CD4-positive, alpha-beta T cell (primary cell): ENCODE measurements at regions of chr17 and their contacts with region 1.

Region 1: GRCh38 chr17:59619293-59620063 is at the start of gene CLTC:
- DNase-seq: peak; percentile 81 to 98 (median 88)
- ATAC-seq: peak; percentile 82
- H3K4me3 ChIP-seq: peak within 1 kb of the TSS; percentile 96
- H3K4me3 Mint-ChIP-seq: peak within 1 kb of the TSS; percentile 97
- H3K27ac ChIP-seq: peak within 1 kb of the TSS; percentile 95 to 96
- H3K27ac Mint-ChIP-seq: peak within 1 kb of the TSS; percentile 98
- H3K4me1 ChIP-seq: peaks cover 22% of the 10 kb centered on the region
- H3K4me1 Mint-ChIP-seq: peaks cover 66% of the 10 kb centered on the region
- H3K27me3 ChIP-seq: no peaks in the 10 kb centered on the region
- H3K27me3 Mint-ChIP-seq: no peaks in the 10 kb centered on the region
- CTCF ChIP-seq: no peak
- total RNA-seq, gene CLTC: 81.5 to 89.9 TPM

Region 2: DNA sequence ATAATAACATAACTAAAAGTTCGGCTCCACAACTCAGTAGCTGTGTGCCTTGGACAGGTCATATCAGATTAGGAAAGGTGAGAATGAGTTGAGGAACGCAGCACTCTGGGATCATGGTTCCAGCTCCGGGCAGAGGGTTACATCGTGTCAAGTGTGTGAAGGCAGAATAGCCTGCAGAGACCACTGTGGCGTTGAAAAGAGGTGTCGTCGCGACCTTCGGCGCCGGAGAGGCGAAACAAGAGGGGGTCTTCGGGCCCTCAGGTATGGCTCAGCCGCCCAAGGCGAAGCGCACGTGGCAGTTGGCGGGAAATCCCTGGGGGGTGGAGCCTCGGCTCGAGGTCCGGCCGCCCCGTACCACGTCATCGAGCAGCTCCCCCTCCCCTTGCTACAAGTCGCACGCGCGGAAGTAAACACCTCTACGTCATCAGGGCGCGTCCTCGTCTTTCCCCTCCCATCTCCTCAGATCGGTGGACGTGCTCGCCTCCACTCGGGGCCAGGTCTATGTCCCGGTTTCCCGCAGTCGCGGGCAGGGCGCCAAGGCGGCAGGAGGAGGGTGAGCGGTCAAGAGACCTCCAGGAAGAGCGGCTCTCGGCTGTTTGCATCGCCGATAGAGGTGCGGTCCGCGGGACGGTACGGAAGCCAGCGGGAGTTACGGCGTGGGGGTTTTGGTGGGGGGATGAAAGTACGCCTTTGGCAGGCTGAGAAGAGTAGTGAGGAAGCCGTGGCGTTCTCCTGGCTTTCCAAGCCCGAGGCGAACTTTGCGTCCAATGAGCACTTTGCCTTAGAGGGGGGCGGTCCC is 54.1 kb before region 1 on chr17 and contains the start of gene DHX40:
- CTCF ChIA-PET with region 1: no interaction called
- POLR2A ChIA-PET with region 1: interaction called, 40 read pairs
- intact Hi-C with region 1: loop called (anchors 1 kb)
- DNase-seq: peak; percentile 86 to 99 (median 92)
- ATAC-seq: peak; percentile 87
- H3K4me3 ChIP-seq: peak within 1 kb of the TSS; percentile 90
- H3K4me3 Mint-ChIP-seq: peak within 1 kb of the TSS; percentile 100
- H3K27ac ChIP-seq: peak within 1 kb of the TSS; percentile 86 to 91
- H3K27ac Mint-ChIP-seq: peak within 1 kb of the TSS; percentile 97
- H3K4me1 ChIP-seq: peaks cover 13% of the 10 kb centered on the region
- H3K4me1 Mint-ChIP-seq: peaks cover 26% of the 10 kb centered on the region
- H3K27me3 ChIP-seq: no peaks in the 10 kb centered on the region
- H3K27me3 Mint-ChIP-seq: no peaks in the 10 kb centered on the region
- CTCF ChIP-seq: no peak
- total RNA-seq, gene DHX40: 62.6 to 65.6 TPM

Region 3: DNA sequence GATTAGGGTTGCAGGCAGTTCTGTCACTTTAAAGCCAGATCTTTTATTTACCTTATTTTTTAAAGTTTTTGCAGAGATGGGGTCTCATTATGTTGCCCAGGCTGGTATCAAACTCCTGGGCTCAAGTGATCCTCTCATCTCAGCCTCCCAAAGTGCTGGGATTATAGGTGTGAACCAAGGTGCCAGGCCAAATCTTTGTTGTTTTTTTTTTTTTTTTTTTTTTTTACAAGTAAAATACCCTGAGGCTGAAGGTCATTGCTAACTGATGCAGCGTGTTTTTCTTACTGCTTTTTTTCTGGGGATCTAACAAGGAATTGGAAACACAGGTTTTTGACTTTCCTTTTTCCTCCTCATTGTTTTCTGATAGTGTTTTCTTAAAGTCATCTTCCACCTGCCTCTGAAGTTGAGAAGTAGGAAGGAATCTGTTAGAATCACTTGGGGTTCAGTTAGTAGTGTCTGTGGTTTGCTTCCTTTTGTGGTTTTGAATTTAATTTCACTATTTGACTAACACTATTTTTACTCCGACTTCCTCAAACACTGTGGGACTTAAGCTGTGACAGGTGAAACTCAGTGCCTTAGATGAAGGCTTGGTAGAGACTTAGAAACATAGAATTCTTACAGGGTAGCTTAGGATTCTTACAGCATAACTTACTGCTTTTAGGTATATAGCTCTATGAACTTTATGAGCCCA is 22.5 kb after region 1 on chr17:
- CTCF ChIA-PET with region 1: no interaction called
- POLR2A ChIA-PET with region 1: interaction called, 32 read pairs
- intact Hi-C with region 1: loop called in 1 of 2 experiments (anchors 1 kb)
- DNase-seq: peak in 3 of 14 experiments; percentile 41 to 63 (median 49)
- ATAC-seq: peak; percentile 89
- H3K4me3 ChIP-seq: no peak overlapping the region
- H3K4me3 Mint-ChIP-seq: peak overlapping the region; percentile 32
- H3K27ac ChIP-seq: no peak overlapping the region
- H3K27ac Mint-ChIP-seq: peak overlapping the region; percentile 62
- H3K4me1 ChIP-seq: peaks cover 23% of the 10 kb centered on the region
- H3K4me1 Mint-ChIP-seq: peaks cover 63% of the 10 kb centered on the region
- H3K27me3 ChIP-seq: no peaks in the 10 kb centered on the region
- H3K27me3 Mint-ChIP-seq: no peaks in the 10 kb centered on the region
- CTCF ChIP-seq: no peak

Region 4: DNA sequence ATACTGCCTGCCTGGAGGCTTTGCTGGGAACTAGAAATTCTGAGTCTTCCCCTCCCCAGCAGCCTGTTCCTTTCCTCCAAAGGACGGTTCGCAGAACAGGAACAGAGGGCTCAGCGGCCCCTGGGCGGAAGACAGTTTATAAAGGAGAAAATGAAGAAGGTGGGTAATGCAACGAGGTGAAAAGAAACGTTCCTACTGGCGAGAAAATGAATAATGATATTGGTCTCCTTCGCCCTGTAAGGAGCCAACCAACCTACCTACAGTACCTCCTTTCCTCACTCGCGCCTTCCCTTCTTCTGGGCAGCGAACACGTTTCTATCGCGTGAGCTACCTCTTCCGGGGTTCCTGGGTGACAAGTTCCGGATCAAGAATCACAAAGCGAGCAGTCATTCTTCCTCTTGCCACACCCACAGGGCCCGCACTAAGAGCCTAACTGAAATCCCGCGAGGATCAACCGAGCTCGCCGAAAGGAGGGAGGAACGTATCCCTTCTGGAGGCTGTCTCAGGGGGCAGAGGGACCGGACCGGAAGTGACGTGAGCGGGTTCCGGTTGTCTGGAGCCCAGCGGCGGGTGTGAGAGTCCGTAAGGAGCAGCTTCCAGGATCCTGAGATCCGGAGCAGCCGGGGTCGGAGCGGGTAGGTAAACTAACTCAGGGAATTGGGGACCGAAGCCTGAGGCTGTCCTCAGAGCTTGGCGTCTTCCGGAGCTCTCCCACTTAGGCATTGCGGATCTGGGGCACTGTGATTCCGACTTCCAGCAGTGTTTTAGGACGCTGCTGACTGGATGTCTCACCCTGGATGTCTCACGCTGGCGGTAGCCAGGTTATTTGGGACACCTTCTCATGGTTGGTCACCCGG is 87.9 kb after region 1 on chr17 and contains the starts of genes PTRH2 and VMP1:
- CTCF ChIA-PET with region 1: interaction called, 3 read pairs
- POLR2A ChIA-PET with region 1: interaction called, 26 read pairs
- intact Hi-C with region 1: loop called in 1 of 2 experiments (anchors 5 kb)
- DNase-seq: peak; percentile 67 to 98 (median 81)
- ATAC-seq: peak; percentile 90
- H3K4me3 ChIP-seq: peak within 1 kb of the TSS; percentile 95
- H3K4me3 Mint-ChIP-seq: peak within 1 kb of the TSS; percentile 93
- H3K27ac ChIP-seq: peak within 1 kb of the TSS; percentile 80 to 96
- H3K27ac Mint-ChIP-seq: peak within 1 kb of the TSS; percentile 94
- H3K4me1 ChIP-seq: peaks cover 37% of the 10 kb centered on the region
- H3K4me1 Mint-ChIP-seq: peaks cover 81% of the 10 kb centered on the region
- H3K27me3 ChIP-seq: no peaks in the 10 kb centered on the region
- H3K27me3 Mint-ChIP-seq: no peaks in the 10 kb centered on the region
- CTCF ChIP-seq: no peak
- total RNA-seq, gene PTRH2: 6.5 to 7.3 TPM
- total RNA-seq, gene VMP1: 73.6 to 81.1 TPM

Region 5: DNA sequence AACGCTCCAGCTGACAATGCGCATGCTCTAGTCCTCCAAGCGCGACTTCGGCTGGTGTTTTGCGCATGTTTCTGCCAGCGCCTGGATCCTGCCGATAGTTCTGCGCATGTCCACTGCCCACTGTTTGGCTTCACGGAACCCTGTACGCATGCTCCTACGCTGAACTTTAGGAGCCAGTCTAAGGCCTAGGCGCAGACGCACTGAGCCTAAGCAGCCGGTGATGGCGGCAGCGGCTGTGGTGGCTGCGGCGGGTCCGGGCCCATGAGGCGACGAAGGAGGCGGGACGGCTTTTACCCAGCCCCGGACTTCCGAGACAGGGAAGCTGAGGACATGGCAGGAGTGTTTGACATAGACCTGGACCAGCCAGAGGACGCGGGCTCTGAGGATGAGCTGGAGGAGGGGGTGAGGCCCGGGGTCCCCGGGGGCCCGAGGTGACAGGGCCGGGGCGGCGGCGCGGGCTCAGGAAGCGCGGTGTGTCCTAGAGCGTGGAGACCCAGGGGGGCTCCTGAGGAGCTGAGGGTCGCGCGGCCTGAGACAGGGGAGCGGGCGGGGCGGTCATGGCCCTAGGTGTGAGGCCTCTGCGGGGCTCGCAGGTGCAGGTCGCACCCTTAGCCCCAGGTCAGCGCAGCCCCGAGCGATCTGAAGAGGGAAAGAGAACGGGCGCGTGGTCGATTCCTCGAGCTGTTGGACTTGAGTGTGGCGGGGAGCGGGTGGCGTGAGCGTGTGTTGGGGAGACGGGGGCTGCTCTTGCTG is 273.6 kb after region 1 on chr17 and contains the starts of genes RPS6KB1 and TUBD1:
- CTCF ChIA-PET with region 1: no interaction called
- POLR2A ChIA-PET with region 1: interaction called, 25 read pairs
- intact Hi-C with region 1: loop called in 1 of 2 experiments (anchors 5 kb)
- DNase-seq: peak; percentile 94 to 100 (median 97)
- ATAC-seq: peak; percentile 91
- H3K4me3 ChIP-seq: peak within 1 kb of the TSS; percentile 79
- H3K4me3 Mint-ChIP-seq: peak within 1 kb of the TSS; percentile 98
- H3K27ac ChIP-seq: peak within 1 kb of the TSS; percentile 88 to 94
- H3K27ac Mint-ChIP-seq: peak within 1 kb of the TSS; percentile 94
- H3K4me1 ChIP-seq: peaks cover 44% of the 10 kb centered on the region
- H3K4me1 Mint-ChIP-seq: peaks cover 65% of the 10 kb centered on the region
- H3K27me3 ChIP-seq: no peaks in the 10 kb centered on the region
- H3K27me3 Mint-ChIP-seq: no peaks in the 10 kb centered on the region
- CTCF ChIP-seq: no peak
- total RNA-seq, gene RPS6KB1: 129 to 135 TPM
- total RNA-seq, gene TUBD1: 7.3 to 9.4 TPM